Upper lobe of right lung (tissue), 1 donor: ENCODE measurements at regions of chr15 and their contacts with region 1.

Region 1: GRCh38 chr15:68875377-68876116 is 54.8 kb upstream of the SPESP1 start:
- DNase-seq: peak; percentile 96
- ATAC-seq: peak; percentile 97
- H3K4me3 ChIP-seq: peak overlapping the region; percentile 32
- H3K27ac ChIP-seq: no peak overlapping the region
- H3K4me1 ChIP-seq: no peaks in the 10 kb centered on the region
- H3K27me3 ChIP-seq: peaks cover 3% of the 10 kb centered on the region
- CTCF ChIP-seq: peak; percentile 86

Region 2: DNA sequence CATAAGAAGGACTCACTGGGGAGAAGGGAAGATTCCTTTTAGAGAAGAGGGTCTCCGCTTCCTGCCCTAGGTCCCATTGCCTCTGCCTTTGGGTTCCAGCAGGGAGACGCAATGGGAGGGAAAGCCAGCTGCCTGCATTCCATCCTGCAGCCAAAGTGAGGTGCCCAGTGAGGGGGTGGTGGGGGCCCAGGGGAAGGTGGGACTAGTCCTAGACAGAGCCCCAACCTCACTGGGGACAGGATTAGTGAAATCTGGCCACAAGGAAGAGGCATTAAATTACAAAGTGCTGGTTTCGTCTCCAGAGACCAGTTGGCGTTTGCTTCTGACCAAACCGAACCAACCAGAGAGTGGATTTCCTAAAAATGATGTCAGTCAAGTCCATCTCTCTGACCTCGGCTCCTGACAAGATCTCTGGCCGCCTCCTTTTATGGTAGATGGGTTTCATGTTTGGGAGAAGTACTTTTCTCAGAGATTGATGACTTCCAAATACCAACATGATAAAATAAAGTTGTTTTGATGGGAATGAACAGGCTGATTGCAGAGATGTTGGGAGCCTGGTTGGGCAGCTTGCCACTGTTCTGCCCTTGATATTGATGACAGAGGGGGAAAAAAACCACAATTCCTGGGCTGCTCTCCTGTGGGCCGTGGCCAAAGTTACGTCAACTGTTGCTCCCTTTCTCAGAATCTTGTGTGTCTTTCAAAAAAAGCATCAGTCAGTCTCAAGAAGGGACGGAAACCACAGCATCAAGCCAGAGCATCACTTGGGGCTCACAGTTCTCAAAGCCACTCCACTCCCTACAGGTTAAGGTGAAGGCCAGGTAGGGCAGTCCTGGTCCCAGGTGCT is 468.3 kb before region 1 on chr15:
- intact Hi-C with region 1: no loop called
- DNase-seq: no peak
- ATAC-seq: no peak
- H3K4me3 ChIP-seq: no peak overlapping the region
- H3K27ac ChIP-seq: no peak overlapping the region
- H3K4me1 ChIP-seq: no peaks in the 10 kb centered on the region
- H3K27me3 ChIP-seq: no peaks in the 10 kb centered on the region
- CTCF ChIP-seq: no peak

Region 3: DNA sequence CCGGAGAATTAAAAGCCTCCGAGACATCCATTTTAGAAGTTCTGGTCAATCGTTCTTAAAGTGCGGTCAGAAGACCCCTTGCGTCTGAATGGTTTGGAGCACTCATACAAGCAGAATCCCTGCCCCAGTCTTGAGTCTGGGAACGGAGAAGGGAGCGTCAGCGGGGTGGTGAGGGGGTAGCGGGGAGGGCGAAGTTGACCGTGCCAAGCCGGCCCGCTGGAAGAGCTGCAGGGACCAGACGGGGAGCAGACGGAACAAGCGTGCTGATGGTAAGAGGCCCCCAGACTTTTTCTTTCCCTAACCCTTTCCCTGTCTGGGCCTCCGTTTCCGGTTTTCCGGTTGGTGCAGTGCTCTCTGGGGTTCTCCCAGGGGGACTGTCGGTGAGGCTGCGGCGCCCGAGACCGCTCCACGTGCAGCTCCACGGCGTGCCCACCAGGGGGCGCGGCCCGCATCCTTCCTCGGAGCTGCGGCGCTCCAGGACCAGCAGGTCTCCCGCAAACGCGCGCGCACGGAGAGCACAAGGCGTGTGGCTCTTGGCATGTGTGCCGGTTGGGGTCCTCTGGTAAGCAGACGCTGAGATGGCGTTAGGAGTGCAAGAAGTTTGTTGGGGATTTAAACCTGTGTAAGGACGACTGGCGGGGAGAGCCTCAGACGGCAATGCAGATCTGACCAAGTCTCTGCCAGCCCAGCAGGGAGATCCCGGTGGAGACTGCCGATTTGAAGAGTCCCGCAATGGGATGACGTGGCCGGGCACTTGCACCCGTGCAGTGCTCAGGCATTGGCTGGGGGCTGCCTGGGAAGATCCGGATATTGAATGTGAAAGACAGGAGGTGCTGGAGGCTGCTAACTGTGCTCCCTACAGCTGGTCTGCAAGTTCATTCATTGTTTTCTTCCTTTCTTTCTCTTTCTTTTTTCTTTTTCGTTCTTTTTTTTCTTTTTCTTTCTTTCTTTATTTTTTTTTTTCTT is 315.9 kb before region 1 on chr15:
- intact Hi-C with region 1: loop called (anchors 10 kb)
- DNase-seq: peak; percentile 91
- ATAC-seq: peak; percentile 96
- H3K4me3 ChIP-seq: peak overlapping the region; percentile 46
- H3K27ac ChIP-seq: no peak overlapping the region
- H3K4me1 ChIP-seq: peaks cover 9% of the 10 kb centered on the region
- H3K27me3 ChIP-seq: peaks cover 17% of the 10 kb centered on the region
- CTCF ChIP-seq: peak; percentile 97

Region 4: DNA sequence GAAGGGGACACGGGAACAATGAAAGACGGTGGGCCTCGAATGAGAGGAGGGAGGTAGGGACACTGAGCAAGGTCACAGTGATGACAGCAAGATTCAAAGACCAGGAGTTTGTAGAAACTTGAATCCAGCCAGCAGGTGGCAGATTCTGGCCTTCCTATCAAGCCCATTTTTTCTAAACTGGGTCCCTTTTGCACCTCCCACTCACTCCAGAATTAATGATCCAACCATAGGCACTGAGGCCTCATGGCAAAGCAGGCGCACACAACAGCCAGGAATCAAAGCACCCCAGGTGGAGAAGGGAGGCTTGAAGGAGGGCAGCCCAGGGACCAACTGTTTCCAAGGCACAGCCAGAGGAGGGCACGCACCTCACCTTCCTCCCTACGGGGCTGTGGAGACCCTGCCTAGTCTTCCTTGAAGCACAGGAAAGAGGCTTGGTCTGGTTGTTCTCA is 145.1 kb before region 1 on chr15:
- intact Hi-C with region 1: loop called (anchors 5 kb)
- DNase-seq: no peak
- ATAC-seq: peak; percentile 57
- H3K4me3 ChIP-seq: no peak overlapping the region
- H3K27ac ChIP-seq: no peak overlapping the region
- H3K4me1 ChIP-seq: peaks cover 10% of the 10 kb centered on the region
- H3K27me3 ChIP-seq: no peaks in the 10 kb centered on the region
- CTCF ChIP-seq: peak; percentile 52